Aorta (tissue), 5 donors: ENCODE measurements at regions of chr10 and their contacts with region 1.

Region 1: DNA sequence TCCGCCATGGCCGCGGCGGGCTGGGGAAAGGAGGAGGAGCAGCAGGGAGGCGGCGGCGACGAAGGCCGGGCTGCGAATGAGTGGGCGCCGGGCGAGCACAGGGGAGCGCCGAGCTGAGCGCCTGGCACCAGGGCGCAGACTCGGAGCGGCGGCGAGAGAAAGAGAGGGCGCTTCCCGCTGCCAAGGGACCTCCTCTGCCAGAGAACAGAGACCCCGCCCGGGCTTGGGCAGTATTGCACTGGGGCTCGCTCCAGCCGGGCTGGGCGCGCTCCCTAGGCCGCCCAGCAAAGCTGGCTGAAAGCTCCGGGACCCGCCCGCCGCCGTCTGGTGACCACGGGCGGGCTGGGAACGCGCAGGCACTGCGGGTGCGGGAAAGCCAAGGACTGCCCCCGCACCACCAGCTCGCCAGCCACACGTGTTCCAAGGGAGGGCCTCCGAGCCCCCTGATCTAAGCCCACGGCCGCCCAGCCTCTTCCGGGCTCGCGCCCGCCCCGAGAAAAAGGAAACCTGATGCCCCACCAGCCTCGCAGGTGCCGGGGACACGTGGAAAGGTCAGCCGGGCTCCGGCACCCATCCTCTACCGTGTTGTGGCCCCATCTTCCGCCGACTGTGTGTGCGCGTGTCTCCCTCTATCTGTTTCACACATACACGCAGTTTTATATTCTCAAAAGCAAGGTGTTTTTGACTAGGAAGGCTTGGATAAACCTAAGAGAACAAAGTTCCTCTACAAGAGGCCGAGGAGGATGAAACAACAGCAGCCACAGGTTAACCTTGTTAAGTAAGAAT is at the start of gene CCDC6:
- DNase-seq: peak; percentile 96 to 98
- ATAC-seq: peak; percentile 95
- H3K4me3 ChIP-seq: peak within 1 kb of the TSS; percentile 82 to 94
- H3K27ac ChIP-seq: peak within 1 kb of the TSS; percentile 64 to 81
- H3K4me1 ChIP-seq: peaks cover 1 to 2% of the 10 kb centered on the region in 2 donors
- H3K27me3 ChIP-seq: no peaks in the 10 kb centered on the region
- total RNA-seq, gene CCDC6: 78.0 to 90.0 TPM

Region 2: DNA sequence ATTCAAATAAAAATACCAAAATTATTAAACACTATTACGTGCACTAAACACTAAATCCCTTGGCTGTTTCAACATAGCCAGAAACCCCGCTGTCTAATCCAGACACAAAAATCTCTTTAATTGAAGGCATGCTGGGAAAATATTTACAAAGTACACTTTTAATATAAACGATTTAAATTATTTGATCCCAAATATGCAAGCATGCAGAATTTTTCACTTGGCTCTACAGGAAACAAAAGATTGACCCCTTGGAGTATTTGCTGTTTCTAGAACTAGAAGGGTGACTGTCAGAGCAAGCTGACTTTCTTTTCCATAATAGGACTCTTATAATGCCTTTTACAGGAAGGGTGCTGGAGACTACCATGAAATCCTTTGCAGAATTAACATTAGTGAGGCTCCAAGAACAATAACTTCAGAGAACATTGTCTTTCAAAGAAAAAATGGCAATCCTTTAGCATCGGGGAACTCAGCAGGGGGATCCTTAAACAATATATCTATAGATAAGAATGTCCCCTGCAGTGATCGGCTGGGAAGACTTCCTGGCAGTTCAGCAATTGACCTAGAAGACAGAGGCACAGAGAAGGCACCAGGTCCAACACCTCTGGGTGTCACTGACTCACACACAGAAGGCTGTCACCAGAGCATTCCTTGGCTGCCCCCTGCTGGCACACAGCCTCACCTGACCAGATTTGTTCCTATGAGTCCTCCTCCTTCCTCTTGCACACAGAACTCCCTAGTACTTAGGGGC is 97.5 kb before region 1 on chr10:
- intact Hi-C with region 1: loop called in 1 of 2 experiments (anchors 5 kb)
- DNase-seq: peak; percentile 84 to 89
- ATAC-seq: peak; percentile 67
- H3K4me3 ChIP-seq: no peak overlapping the region
- H3K27ac ChIP-seq: no peak overlapping the region
- H3K4me1 ChIP-seq: peaks cover 0 to 5% of the 10 kb centered on the region in 2 donors
- H3K27me3 ChIP-seq: no peaks in the 10 kb centered on the region

Region 3: DNA sequence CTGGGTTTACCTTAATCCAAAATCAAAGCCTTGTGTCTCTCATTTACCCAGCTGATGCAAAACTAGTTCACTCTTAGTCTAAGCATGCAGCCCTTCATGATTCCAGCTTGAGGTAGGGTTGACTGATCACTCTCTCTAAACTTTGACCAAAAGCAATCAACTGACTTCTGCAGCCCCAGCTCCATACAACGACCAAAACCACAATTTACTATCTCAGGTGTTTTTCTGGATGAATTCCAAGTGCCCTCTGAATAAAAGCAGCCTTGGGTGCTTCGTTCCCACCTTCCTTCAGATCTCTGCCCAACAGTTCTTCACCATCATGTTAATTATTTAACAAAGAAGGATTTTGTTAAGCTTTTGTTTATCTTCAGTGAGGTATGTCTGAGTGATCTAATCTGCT is 62.9 kb before region 1 on chr10:
- intact Hi-C with region 1: loop called in 1 of 2 experiments (anchors 5 kb)
- DNase-seq: no peak
- ATAC-seq: no peak
- H3K4me3 ChIP-seq: no peak overlapping the region
- H3K27ac ChIP-seq: peak overlapping the region; percentile 57 to 61
- H3K4me1 ChIP-seq: peaks cover 3 to 6% of the 10 kb centered on the region in 2 donors
- H3K27me3 ChIP-seq: no peaks in the 10 kb centered on the region

Region 4: DNA sequence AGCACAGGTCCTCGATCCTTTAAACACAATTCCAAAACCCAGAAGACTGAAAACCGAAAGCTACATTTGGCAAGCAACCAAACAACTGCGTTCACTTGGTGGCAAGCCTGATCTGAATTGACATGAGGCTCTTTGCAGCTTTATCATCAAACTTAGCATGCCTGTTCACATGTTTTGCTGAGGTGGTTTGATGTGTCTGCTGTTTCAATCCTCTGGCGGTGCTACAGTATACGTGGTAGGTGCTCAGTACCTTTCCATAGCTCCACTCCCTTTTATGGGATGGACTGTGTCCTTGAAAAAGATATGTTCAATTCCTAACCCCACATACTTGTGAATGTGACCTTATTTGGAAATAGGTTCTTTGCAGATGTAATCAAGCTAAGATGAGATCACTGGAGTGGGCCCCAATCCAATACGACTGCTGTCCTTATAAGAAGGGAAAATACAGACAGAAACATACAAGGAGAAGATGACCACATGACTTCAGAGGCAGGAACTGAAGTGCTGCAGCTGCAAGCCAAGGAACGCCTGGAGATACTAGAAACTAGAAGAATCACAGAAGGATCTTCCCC is 33.6 kb before region 1 on chr10:
- intact Hi-C with region 1: loop called in 1 of 2 experiments (anchors 2 kb)
- DNase-seq: peak in 1 of 2 donors; percentile 81
- ATAC-seq: peak; percentile 80
- H3K4me3 ChIP-seq: peak overlapping the region; percentile 36 to 94
- H3K27ac ChIP-seq: peak overlapping the region; percentile 98 to 100
- H3K4me1 ChIP-seq: peaks cover 2 to 19% of the 10 kb centered on the region in 2 donors
- H3K27me3 ChIP-seq: no peaks in the 10 kb centered on the region